ENCODE measurements at regions of chr5 and their contacts with region 1.

Region 1: GRCh38 chr5:76256116-76256889 is 146.8 kb upstream of the IQGAP2 start:
- DNase-seq: peak; percentile 20 to 70 (median 56)
- ATAC-seq: peak; percentile 96
- H3K4me3 ChIP-seq: no peak overlapping the region
- H3K4me3 Mint-ChIP-seq: peak overlapping the region in 4 of 10 donors; percentile 23 to 45 (median 42)
- H3K27ac ChIP-seq: no peak overlapping the region
- H3K27ac Mint-ChIP-seq: peak overlapping the region in 3 of 9 donors; percentile 8 to 23 (median 11)
- H3K4me1 ChIP-seq: no peaks in the 10 kb centered on the region
- H3K4me1 Mint-ChIP-seq: peaks cover 0 to 12% (median 3%) of the 10 kb centered on the region in 7 donors
- H3K27me3 ChIP-seq: no peaks in the 10 kb centered on the region
- H3K27me3 Mint-ChIP-seq: peaks cover 4 to 36% (median 4%) of the 10 kb centered on the region in 5 donors

Region 2: GRCh38 chr5:74919487-74919886 is 1336.8 kb before region 1 on chr5:
- CTCF ChIA-PET with region 1: no interaction called
- POLR2A ChIA-PET with region 1: no interaction called
- intact Hi-C with region 1: loop called in 1 of 2 experiments (anchors 2 kb)
- DNase-seq: peak in 7 of 9 donors; percentile 12 to 54 (median 29)
- ATAC-seq: peak; percentile 80
- H3K4me3 ChIP-seq: no peak overlapping the region
- H3K4me3 Mint-ChIP-seq: no peak overlapping the region
- H3K27ac ChIP-seq: no peak overlapping the region
- H3K27ac Mint-ChIP-seq: no peak overlapping the region
- H3K4me1 ChIP-seq: no peaks in the 10 kb centered on the region
- H3K4me1 Mint-ChIP-seq: no peaks in the 10 kb centered on the region
- H3K27me3 ChIP-seq: no peaks in the 10 kb centered on the region
- H3K27me3 Mint-ChIP-seq: peaks cover 0 to 6% (median 4%) of the 10 kb centered on the region in 5 donors

Region 3: DNA sequence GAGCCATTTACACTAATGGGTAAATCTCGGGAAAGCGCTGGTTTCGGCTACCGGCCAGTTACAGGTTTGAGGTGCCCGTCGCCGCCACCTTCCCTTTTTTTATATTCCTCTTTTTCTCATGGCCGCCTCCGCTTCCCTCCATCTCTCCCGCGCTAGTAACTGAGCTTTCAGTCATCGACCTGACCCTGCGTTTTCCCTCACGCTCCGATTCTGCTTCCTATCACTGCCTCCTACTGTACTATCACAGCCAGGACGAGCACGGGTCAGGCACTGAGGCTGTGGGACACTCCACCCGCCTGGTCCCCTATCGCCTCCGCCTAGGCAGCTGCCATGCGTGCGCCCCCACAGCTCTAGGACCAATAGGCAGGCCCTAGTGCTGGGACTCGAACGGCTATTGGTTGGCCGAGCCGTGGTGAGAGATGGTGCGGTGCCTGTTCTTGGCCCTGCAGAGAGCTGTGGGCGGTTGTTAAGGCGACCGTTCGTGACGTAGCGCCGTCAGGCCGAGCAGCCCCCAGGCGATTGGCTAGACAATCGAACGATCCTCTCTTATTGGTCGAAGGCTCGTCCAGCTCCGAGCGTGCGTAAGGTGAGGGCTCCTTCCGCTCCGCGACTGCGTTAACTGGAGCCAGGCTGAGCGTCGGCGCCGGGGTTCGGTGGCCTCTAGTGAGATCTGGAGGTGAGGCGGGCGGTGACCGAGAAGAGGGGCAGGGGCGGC is 919.5 kb before region 1 on chr5 and contains the start of gene HMGCR:
- CTCF ChIA-PET with region 1: no interaction called
- POLR2A ChIA-PET with region 1: no interaction called
- intact Hi-C with region 1: loop called in 1 of 2 experiments (anchors 2 kb)
- DNase-seq: peak; percentile 82 to 97 (median 95)
- ATAC-seq: peak; percentile 96
- H3K4me3 ChIP-seq: peak within 1 kb of the TSS; percentile 85
- H3K4me3 Mint-ChIP-seq: no peak within 1 kb of the TSS
- H3K27ac ChIP-seq: peak within 1 kb of the TSS; percentile 83
- H3K27ac Mint-ChIP-seq: no peak within 1 kb of the TSS
- H3K4me1 ChIP-seq: peaks cover 8 to 10% of the 10 kb centered on the region in 2 donors
- H3K4me1 Mint-ChIP-seq: peaks cover 18 to 41% (median 37%) of the 10 kb centered on the region in 7 donors
- H3K27me3 ChIP-seq: no peaks in the 10 kb centered on the region
- H3K27me3 Mint-ChIP-seq: no peaks in the 10 kb centered on the region
- total RNA-seq, gene HMGCR: 38.8 to 57.3 (median 43.8) TPM

Region 4: DNA sequence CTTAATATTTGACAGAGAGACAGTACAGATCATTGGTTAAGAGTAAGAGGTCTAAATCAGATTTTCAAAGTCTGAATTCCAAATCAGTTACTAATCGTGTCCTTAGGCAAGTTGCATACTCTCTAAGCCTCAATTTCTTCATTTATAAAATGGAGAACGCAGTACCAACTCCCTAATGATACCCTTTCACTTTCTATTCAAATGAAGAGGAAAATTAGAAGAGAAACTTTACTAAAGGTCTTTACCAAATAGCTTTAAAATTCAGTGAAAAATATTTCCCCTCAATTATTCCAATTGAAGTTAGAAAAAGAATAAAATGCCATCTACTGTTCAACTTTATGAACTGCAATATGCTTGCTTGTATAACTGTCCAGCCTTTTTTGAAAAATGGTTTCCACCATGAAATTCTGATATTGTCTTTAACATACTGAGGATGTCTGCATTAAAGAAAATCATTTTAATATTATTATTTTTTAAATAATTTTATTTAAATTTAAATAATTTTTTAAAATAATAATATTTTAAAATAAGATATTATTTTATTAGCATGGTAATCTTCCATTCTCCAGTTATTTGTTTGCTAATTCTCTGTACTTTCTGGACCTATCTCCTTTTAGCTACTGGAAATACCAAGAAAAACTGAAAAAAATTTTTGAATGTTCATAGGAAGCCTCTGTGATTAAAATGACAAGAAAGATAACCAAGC is 575.0 kb before region 1 on chr5:
- CTCF ChIA-PET with region 1: interaction called, 3 read pairs
- POLR2A ChIA-PET with region 1: interaction called, 3 read pairs
- intact Hi-C with region 1: loop called in 1 of 2 experiments (anchors 5 kb)
- DNase-seq: peak in 4 of 9 donors; percentile 24 to 46 (median 38)
- ATAC-seq: peak; percentile 66
- H3K4me3 ChIP-seq: no peak overlapping the region
- H3K4me3 Mint-ChIP-seq: no peak overlapping the region
- H3K27ac ChIP-seq: no peak overlapping the region
- H3K27ac Mint-ChIP-seq: no peak overlapping the region
- H3K4me1 ChIP-seq: peaks cover 0 to 3% of the 10 kb centered on the region in 2 donors
- H3K4me1 Mint-ChIP-seq: peaks cover 7 to 27% (median 18%) of the 10 kb centered on the region in 7 donors
- H3K27me3 ChIP-seq: no peaks in the 10 kb centered on the region
- H3K27me3 Mint-ChIP-seq: no peaks in the 10 kb centered on the region

Region 5: GRCh38 chr5:75885849-75886598 is 370.3 kb before region 1 on chr5:
- CTCF ChIA-PET with region 1: no interaction called
- POLR2A ChIA-PET with region 1: no interaction called
- intact Hi-C with region 1: loop called in 1 of 2 experiments (anchors 2 kb)
- DNase-seq: peak in 1 of 9 donors; percentile 1
- ATAC-seq: no peak
- H3K4me3 ChIP-seq: no peak overlapping the region
- H3K4me3 Mint-ChIP-seq: no peak overlapping the region
- H3K27ac ChIP-seq: no peak overlapping the region
- H3K27ac Mint-ChIP-seq: no peak overlapping the region
- H3K4me1 ChIP-seq: no peaks in the 10 kb centered on the region
- H3K4me1 Mint-ChIP-seq: no peaks in the 10 kb centered on the region
- H3K27me3 ChIP-seq: no peaks in the 10 kb centered on the region
- H3K27me3 Mint-ChIP-seq: peaks cover 0 to 10% (median 3%) of the 10 kb centered on the region in 5 donors

Region 6: DNA sequence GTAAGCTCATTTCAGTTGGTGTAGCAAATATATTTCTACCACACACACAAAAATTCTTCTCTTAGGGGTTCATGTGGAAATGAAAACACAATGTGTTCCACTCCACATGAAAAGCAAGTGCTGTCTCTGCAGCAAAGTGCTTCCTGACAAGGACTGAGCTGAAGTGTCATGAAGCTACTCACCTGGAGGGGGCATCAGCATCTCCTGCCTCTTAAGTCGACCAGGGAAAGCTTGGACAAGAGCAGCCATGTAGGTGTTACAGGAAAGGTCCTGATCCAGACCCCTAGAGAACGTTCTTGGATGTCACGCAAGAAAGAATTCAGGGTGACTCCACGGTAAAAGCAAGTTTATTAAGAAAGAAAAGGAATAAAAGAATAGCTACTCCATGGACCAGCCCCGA is 110.4 kb before region 1 on chr5:
- CTCF ChIA-PET with region 1: no interaction called
- POLR2A ChIA-PET with region 1: no interaction called
- intact Hi-C with region 1: loop called in 1 of 2 experiments (anchors 1 kb)
- DNase-seq: no peak
- ATAC-seq: no peak
- H3K4me3 ChIP-seq: no peak overlapping the region
- H3K4me3 Mint-ChIP-seq: no peak overlapping the region
- H3K27ac ChIP-seq: no peak overlapping the region
- H3K27ac Mint-ChIP-seq: no peak overlapping the region
- H3K4me1 ChIP-seq: no peaks in the 10 kb centered on the region
- H3K4me1 Mint-ChIP-seq: no peaks in the 10 kb centered on the region
- H3K27me3 ChIP-seq: no peaks in the 10 kb centered on the region
- H3K27me3 Mint-ChIP-seq: peaks cover 0 to 17% (median 2%) of the 10 kb centered on the region in 5 donors

Region 7: DNA sequence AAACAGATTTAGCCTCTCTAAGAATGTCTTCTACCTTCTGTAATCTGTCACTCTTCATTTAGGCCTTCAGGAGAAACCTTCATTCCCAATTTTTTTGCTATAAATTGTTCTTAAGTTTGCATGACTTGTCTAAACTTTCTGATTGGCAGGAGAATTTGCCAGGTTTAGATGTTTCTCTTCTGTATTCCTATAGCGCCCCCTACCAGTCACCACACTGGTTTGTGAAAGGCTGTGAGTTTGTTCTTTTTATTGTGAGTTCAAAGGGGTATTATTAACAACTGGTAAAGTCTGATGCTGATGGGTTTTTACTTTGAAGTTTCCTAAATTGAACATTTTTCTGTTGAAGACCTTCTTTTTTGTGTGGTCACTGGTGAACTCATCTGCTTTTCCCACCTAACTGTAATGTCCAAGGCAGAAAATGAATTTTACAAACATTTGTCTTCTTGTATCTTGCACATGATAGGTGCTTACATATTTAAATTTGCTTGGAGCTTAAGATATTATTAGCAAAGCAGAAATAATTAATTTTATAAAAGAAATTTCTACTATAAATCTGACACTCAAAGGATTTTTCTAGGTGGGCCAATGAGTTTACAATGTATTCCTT is 385.3 kb after region 1 on chr5:
- CTCF ChIA-PET with region 1: no interaction called
- POLR2A ChIA-PET with region 1: no interaction called
- intact Hi-C with region 1: loop called in 1 of 2 experiments (anchors 5 kb)
- DNase-seq: peak; percentile 13 to 71 (median 55)
- ATAC-seq: peak; percentile 78
- H3K4me3 ChIP-seq: no peak overlapping the region
- H3K4me3 Mint-ChIP-seq: no peak overlapping the region
- H3K27ac ChIP-seq: no peak overlapping the region
- H3K27ac Mint-ChIP-seq: no peak overlapping the region
- H3K4me1 ChIP-seq: no peaks in the 10 kb centered on the region
- H3K4me1 Mint-ChIP-seq: peaks cover 0 to 13% (median 0%) of the 10 kb centered on the region in 7 donors
- H3K27me3 ChIP-seq: no peaks in the 10 kb centered on the region
- H3K27me3 Mint-ChIP-seq: no peaks in the 10 kb centered on the region

Measured in naive thymus-derived CD4-positive, alpha-beta T cell (primary cell).